HEK293 (cell line): ENCODE measurements at regions of chr12 and their contacts with region 1.

Region 1: GRCh38 chr12:55926738-55927587 is 731 bp downstream of the PYM1 start:
- H3K4me3 ChIP-seq: peak overlapping the region; percentile 80
- H3K27ac ChIP-seq: peak overlapping the region; percentile 94
- H3K4me1 ChIP-seq: peaks cover 4% of the 10 kb centered on the region; the same call in 1 of the 2 replicates
- CTCF ChIP-seq: peak; percentile 91

Region 2: GRCh38 chr12:55817346-55818139 is 109.4 kb before region 1 on chr12 and contains the starts of genes ORMDL2 and SARNP:
- CTCF ChIA-PET with region 1: interaction called, 8 read pairs
- POLR2A ChIA-PET with region 1: interaction called, 22 read pairs
- H3K4me3 ChIP-seq: peak within 1 kb of the TSS; percentile 83
- H3K27ac ChIP-seq: peak within 1 kb of the TSS; percentile 72
- H3K4me1 ChIP-seq: peaks cover 6% of the 10 kb centered on the region; the same call in 1 of the 2 replicates
- CTCF ChIP-seq: no peak

Region 3: DNA sequence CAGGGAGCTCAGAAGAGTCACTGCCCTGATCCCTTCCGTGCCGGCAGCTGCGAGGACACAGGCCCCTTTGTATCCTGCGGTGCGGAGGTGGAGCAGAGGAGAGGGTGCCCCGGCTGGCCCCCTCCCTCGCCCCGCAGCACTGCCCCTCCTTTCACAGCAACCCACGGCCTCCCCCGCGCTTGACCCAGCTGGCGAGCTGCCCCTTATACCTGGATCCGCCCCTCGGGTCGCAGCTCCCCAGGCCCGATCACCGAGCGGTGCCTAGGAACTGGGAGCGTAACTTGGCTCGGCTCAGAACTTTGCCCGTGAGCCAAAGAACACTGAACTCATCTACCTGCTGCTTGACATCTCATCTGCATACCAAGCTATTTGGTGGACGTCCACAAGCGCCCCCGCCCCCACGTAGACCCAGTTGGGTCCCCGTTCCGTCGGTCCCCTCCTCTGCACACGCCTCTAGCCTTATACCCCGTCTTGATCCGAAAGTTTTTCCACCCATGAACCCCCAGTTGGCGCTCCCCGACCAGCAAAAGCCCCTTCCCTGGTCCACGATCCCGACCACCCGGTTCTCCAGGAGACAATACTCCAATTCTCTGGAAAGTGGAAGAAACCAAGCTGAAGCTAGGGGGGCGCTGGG is 96.9 kb before region 1 on chr12:
- CTCF ChIA-PET with region 1: interaction called, 18 read pairs
- POLR2A ChIA-PET with region 1: interaction called, 42 read pairs
- H3K4me3 ChIP-seq: peak overlapping the region; percentile 83
- H3K27ac ChIP-seq: peak overlapping the region; percentile 77
- H3K4me1 ChIP-seq: peaks cover 12% of the 10 kb centered on the region
- CTCF ChIP-seq: no peak; the same call in 1 of the 2 replicates

Region 4: DNA sequence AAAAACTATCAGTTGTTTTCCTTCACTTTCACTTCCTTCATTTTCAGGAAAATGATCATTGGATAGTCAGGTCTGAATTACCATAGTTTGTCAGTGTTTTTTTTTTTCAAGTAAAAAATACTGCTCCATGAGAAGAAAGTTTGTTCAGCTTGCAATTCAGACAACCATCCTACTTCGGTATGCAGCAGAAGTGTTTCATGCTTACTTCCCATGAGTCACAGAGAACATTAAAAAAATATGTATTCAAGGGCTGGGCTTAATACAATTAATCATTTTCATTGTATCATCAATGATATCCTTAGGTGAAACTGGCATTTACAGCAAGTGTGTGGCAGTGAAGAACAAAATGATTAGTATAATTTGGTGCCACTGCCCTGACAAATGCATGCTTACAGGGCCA is 20.9 kb before region 1 on chr12:
- CTCF ChIA-PET with region 1: interaction called, 6 read pairs
- POLR2A ChIA-PET with region 1: interaction called, 12 read pairs
- H3K4me3 ChIP-seq: no peak overlapping the region
- H3K27ac ChIP-seq: no peak overlapping the region
- H3K4me1 ChIP-seq: no peaks in the 10 kb centered on the region
- CTCF ChIP-seq: no peak

Region 5: GRCh38 chr12:55915482-55915859 is 11.5 kb before region 1 on chr12:
- CTCF ChIA-PET with region 1: interaction called, 27 read pairs
- POLR2A ChIA-PET with region 1: no interaction called
- H3K4me3 ChIP-seq: no peak overlapping the region
- H3K27ac ChIP-seq: no peak overlapping the region
- H3K4me1 ChIP-seq: no peaks in the 10 kb centered on the region
- CTCF ChIP-seq: no peak

Region 6: DNA sequence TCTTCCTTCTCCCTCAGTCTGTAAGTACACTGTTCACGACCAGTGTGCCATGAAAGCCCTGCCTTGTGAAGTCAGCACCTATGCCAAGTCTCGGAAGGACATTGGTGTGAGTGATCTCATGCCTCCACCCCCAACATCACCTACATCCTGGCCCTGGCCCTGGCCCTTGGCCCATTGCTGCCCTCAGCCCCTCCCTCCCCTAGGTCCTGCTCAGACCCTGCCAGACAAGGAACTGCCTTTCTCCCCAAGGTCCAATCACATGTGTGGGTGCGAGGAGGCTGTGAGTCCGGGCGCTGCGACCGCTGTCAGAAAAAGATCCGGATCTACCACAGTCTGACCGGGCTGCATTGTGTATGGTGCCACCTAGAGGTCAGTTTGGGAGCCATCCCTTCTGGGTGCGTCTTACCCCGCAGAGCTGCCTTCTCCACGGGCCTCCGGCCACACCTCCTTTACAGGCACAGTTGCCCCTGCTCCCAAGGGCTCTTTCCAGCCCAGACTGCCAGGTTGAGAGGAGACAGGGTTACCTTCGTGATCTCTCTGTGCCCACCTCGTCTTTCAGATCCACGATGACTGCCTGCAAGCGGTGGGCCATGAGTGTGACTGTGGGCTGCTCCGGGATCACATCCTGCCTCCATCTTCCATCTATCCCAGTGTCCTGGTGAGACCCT is 13.2 kb after region 1 on chr12:
- CTCF ChIA-PET with region 1: interaction called, 28 read pairs
- POLR2A ChIA-PET with region 1: interaction called, 4 read pairs
- H3K4me3 ChIP-seq: no peak overlapping the region
- H3K27ac ChIP-seq: no peak overlapping the region
- H3K4me1 ChIP-seq: no peaks in the 10 kb centered on the region
- CTCF ChIP-seq: peak; percentile 91